ENCODE measurements at regions of chr2 and their contacts with region 1.

Region 1: GRCh38 chr2:85243101-85244072 is 84.4 kb downstream of the TGOLN2 start:
- DNase-seq: peak in 7 of 10 donors; percentile 34 to 92 (median 71)

Region 2: DNA sequence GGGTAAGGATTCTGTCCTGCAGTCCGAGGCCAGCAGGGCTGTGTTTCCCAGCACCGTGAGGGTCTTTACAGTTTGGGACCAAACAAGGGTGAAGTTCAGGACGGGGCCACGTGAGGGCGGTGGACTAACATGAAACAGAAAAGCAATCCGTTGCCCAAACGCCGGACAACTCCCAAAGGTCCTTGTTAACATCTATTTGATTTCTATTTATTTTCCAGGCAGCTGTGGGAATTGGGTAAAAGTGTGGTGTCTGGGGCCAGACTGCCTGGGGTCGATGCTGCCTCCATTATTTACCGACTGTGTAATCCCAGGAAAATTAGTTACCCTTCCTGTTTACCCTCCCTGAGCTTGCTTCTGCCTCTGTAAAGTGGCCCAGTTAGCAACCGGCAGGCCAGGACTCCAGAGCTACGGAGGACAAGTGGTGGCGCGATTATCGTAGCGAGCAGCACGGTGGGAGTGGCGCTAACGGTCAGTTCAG is 176.5 kb before region 1 on chr2:
- intact Hi-C with region 1: loop called (anchors 2 kb)
- DNase-seq: peak in 9 of 10 donors; percentile 40 to 94 (median 67)

Region 3: DNA sequence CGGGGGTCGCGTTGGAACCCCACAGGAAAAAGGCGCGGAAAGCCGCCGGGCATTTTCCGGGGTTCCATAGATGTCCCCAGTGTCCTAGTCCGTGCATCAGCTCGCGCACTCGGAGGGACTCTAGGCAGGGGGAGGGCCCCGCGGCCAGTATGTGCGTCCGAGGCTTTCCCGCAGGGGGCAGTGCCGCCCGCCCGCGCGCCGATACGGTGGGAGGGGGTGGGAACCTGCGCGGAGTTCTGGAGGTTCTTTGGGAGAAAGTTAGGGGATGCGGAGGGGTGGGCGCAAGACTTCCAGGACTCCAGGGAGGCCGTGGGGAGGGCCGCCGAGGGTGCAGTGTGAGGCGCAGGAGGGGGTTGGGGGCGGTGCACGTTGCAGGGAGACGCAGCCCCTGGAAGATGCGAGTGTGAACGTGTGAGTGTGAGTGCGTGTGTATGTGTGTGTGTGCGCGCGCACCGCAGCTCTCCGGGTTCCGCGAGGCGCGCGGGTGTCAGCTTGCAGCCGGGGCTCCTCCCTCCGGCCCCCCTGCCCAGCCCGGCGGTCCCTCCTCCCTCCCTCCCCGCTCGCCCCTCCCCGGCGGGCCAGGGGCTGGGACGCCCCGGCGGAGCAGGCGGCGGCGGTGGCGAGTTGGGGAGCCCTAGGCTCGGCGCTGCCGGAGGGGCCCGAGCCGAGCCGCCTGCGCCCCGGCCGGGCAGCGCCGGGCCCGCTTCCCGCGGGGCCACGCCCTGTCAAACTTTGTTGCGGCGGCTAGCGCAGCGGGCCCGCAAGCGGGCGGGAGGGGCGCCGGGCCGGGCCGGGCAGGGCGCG is 110.4 kb before region 1 on chr2 and contains the start of gene TCF7L1:
- intact Hi-C with region 1: loop called (anchors 5 kb)
- DNase-seq: peak; percentile 34 to 91 (median 52)